Naive thymus-derived CD4-positive, alpha-beta T cell (primary cell): ENCODE measurements at regions of chr9 and their contacts with region 1.

Region 1: DNA sequence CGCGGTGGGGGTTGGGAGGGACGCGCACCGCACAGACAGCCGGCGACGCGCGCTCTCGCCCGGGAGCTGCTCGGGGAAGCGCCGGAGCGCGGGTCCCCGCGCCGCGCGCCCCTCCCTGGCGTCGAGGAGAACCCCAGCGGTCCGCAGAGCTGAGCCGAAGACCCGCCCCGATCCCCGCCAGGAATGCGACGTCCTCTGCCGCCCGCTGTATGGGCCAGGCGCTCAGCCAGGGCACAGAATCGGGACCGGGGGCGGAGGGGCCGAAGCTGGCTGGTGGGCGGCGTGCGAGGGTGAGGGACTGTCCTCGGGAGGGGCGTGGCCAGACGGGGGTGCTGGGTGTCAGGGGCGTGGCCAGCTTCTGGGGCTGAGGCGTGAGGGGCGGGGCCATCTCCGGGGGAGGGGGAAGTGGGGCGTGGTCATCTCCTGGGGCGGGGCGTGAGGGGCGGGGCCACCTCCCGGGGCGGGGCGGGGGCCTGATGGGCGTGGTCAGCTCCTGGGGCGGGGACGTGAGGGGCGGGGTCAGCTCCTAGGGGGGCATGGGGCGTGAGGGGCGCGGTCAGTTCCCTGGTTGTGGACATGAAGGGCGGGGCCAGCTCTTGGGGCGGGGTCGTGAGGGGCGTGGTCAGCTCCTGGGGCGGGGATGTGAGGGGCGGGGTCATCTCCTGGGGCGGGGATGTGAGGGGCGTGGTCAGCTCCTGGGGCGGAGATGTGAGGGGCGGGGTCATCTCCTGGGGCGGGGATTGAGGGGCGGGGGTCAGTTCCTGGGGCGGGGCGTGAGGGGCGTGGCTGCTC is 965 bp downstream of the PTGDS start:
- DNase-seq: peak; percentile 40 to 82 (median 51)
- ATAC-seq: peak; percentile 87
- H3K4me3 ChIP-seq: no peak overlapping the region
- H3K4me3 Mint-ChIP-seq: peak overlapping the region in 3 of 10 donors; percentile 12 to 37 (median 23)
- H3K27ac ChIP-seq: no peak overlapping the region
- H3K27ac Mint-ChIP-seq: no peak overlapping the region
- H3K4me1 ChIP-seq: peaks cover 13 to 23% of the 10 kb centered on the region in 2 donors
- H3K4me1 Mint-ChIP-seq: peaks cover 0 to 19% (median 7%) of the 10 kb centered on the region in 7 donors
- H3K27me3 ChIP-seq: peaks cover 0 to under 1% of the 10 kb centered on the region in 2 donors
- H3K27me3 Mint-ChIP-seq: peaks cover 0 to 9% (median 3%) of the 10 kb centered on the region in 5 donors

Region 2: DNA sequence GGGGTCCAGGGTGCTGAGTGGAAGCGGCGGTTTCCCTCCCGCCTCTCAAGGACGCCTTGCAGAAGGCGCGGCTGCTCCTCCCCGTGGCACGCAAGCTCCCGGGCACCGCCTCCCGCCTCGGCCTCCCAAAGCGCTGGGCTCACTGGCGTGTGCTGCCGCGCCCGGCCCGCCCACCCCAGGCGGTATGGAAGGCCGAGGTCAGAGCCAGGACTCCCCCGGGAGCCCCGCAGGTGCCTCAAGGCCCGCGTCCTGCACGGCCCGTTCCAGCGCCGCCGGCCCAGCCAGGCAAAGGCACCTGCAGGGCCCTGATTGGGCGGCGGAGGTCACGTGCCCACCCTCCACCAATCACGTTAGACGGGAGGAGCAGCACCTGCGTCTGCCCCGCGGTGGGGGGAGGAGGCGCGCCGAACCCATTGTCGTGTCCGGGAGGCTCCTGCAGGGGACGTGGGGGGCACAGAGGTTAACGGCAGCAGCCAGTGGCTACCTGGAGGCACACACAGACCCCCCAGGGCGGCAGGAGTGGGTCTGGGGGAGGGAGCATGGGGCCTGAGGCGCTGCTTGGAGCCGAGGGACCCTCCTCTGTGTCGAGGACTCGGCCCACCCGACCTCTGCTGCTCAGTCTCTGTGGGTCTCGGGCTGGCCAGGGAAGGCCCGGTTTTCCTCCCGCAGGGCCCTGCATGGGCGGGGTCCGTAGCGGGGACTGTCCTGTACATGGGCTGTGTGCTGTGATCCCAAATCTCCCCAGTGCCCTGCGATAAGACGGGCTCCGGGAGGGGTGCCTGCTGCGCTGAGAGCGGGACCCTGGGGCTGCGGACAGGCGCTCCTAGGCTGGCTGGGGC is 28.2 kb before region 1 on chr9:
- CTCF ChIA-PET with region 1: no interaction called
- POLR2A ChIA-PET with region 1: interaction called, 3 read pairs
- intact Hi-C with region 1: loop called in 1 of 2 experiments (anchors 1 kb)
- DNase-seq: peak; percentile 89 to 97 (median 95)
- ATAC-seq: peak; percentile 97
- H3K4me3 ChIP-seq: peak overlapping the region; percentile 68
- H3K4me3 Mint-ChIP-seq: peak overlapping the region; percentile 74 to 93 (median 86)
- H3K27ac ChIP-seq: peak overlapping the region; percentile 81
- H3K27ac Mint-ChIP-seq: peak overlapping the region; percentile 66 to 91 (median 86)
- H3K4me1 ChIP-seq: peaks cover 4 to 13% of the 10 kb centered on the region in 2 donors
- H3K4me1 Mint-ChIP-seq: peaks cover 0 to 13% (median 0%) of the 10 kb centered on the region in 7 donors
- H3K27me3 ChIP-seq: no peaks in the 10 kb centered on the region
- H3K27me3 Mint-ChIP-seq: no peaks in the 10 kb centered on the region

Region 3: DNA sequence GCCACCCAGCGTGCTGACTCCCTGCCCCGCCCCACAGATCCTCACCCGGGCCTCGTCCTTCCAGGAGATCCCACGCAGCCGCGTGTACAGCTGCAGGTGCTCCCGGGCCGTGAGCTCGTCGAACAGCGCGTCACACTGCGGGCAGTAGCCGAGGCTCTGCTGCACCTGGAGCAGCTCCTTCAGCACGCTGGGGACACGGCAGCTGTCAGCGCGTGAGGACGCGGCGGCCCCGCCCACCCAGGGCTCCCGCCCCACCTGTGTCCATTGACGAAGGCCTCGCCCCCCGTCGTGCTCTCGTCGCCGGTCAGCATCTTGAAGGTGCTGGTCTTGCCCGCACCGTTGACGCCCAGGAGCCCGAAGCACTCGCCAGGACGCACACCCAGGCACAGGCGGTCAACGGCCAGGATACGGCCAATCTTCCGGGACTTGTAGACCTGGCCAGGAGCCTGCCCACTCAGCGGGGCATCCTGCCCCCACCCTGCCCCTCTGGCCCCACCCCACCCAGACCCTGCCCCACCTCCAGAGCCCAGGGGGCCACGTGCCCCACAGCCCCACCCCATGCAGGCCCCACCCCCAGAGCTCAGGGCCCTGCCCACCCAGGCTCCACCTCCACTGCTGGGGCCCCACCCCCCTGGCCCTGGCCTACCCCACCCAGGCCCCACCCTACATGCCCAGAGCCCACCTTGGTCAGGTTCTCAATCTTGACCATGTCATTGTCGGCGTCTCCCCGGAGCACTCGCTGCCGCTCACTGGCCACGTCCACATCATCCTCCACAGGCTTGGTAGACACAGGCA is 31.9 kb after region 1 on chr9:
- CTCF ChIA-PET with region 1: no interaction called
- POLR2A ChIA-PET with region 1: no interaction called
- intact Hi-C with region 1: no loop called
- DNase-seq: no peak
- ATAC-seq: no peak
- H3K4me3 ChIP-seq: no peak overlapping the region
- H3K4me3 Mint-ChIP-seq: no peak overlapping the region
- H3K27ac ChIP-seq: no peak overlapping the region
- H3K27ac Mint-ChIP-seq: no peak overlapping the region
- H3K4me1 ChIP-seq: no peaks in the 10 kb centered on the region
- H3K4me1 Mint-ChIP-seq: no peaks in the 10 kb centered on the region
- H3K27me3 ChIP-seq: no peaks in the 10 kb centered on the region
- H3K27me3 Mint-ChIP-seq: no peaks in the 10 kb centered on the region

Region 4: DNA sequence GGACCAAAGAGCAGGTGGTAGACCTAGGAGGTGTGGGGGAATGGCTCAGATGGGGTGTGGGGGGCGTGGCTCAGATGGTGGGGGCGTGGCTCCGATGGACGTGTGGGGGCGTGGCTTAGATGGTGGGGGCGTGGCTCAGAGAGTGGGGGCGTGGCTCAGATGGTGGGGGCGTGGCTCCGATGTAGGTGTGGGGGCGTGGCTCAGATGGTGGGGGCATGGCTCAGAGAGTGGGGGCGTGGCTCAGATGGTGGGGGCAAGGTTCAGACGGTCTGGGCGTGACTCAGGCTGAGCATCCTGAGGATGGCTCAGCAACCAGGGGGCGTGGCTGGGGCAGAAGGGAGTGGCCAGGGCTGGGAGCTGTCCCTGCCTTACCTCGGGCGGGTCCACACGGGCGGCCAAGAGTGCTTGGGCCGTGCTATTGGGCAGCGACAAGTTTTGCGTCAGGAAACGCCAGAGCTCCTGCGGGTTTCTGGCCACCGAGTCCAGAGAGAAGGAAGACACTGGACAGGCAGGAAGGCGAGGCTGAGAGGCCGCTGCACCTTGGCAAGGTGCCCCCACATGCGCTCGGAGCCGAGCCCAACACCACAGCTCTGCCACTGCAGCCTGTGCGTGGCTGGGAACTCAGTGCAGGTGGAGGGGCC is 43.8 kb after region 1 on chr9:
- CTCF ChIA-PET with region 1: interaction called, 3 read pairs
- POLR2A ChIA-PET with region 1: no interaction called
- intact Hi-C with region 1: loop called in 1 of 2 experiments (anchors 1 kb)
- DNase-seq: peak in 5 of 9 donors; percentile 35 to 76 (median 39)
- ATAC-seq: peak; percentile 95
- H3K4me3 ChIP-seq: no peak overlapping the region
- H3K4me3 Mint-ChIP-seq: no peak overlapping the region
- H3K27ac ChIP-seq: no peak overlapping the region
- H3K27ac Mint-ChIP-seq: peak overlapping the region in 3 of 9 donors; percentile 33 to 49 (median 41)
- H3K4me1 ChIP-seq: peaks cover 2 to 9% of the 10 kb centered on the region in 2 donors
- H3K4me1 Mint-ChIP-seq: peaks cover under 1 to 5% (median 2%) of the 10 kb centered on the region in 7 donors
- H3K27me3 ChIP-seq: no peaks in the 10 kb centered on the region
- H3K27me3 Mint-ChIP-seq: peaks cover 0 to under 1% (median 0%) of the 10 kb centered on the region in 5 donors